ENCODE measurements at regions of chr12 and their contacts with region 1.

Region 1: DNA sequence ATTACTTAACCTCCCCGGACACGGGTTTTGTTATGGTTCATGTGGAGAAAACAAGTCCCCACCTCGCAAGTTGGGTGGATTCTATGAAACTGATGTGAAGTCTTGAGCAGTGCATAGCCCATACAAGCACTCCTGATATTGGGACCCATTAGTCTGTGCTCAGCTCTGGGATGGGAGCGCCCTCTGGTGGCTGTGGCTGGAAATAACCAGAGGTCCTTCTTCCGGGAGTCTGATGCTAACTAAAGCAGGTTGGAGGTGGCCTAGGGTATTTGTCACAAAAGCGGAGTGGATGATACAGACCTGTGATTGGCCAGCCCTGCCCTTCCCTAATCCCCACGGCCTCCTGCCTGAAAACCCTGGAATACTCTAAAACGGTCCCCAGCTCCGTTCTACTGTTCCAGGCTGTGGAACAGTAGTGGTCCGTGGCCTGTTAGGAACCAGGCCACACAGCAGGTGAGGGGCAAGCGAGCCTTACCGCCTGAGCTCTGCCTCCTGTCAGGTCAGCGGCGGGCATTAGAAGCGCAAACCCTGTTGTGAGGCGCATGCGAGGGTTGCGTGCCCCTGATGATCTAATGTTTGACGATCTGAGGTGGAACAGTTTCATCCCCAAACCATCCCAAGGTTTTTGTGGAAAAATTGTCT is 6.4 kb downstream of the SLC48A1 start:
- DNase-seq: peak; percentile 84 to 94 (median 86)
- ATAC-seq: peak; percentile 53 to 80 (median 66)
- H3K4me3 ChIP-seq: no peak overlapping the region
- H3K27ac ChIP-seq: peak overlapping the region in 2 of 12 donors; percentile 12 to 43
- H3K4me1 ChIP-seq: peaks cover under 1 to 61% (median 50%) of the 10 kb centered on the region in 12 donors
- H3K27me3 ChIP-seq: no peaks in the 10 kb centered on the region
- CTCF ChIP-seq: peak; percentile 89 to 98 (median 92)
- POLR2A ChIP-seq: no peak

Region 2: GRCh38 chr12:47808050-47808449 is 28.6 kb after region 1 on chr12:
- intact Hi-C with region 1: no loop called
- DNase-seq: peak; percentile 65 to 78 (median 73)
- ATAC-seq: peak; percentile 19 to 51 (median 26)
- H3K4me3 ChIP-seq: peak overlapping the region in 8 of 12 donors; percentile 1 to 31 (median 9)
- H3K27ac ChIP-seq: peak overlapping the region; percentile 37 to 99 (median 98)
- H3K4me1 ChIP-seq: peaks cover 49 to 100% (median 98%) of the 10 kb centered on the region in 12 donors
- H3K27me3 ChIP-seq: no peaks in the 10 kb centered on the region
- CTCF ChIP-seq: no peak
- POLR2A ChIP-seq: no peak

Region 3: GRCh38 chr12:47819896-47820630 is 40.6 kb after region 1 on chr12 and contains the start of gene HDAC7:
- intact Hi-C with region 1: loop called in 1 of 10 experiments (anchors 5 kb)
- DNase-seq: peak; percentile 94
- ATAC-seq: peak; percentile 69 to 83 (median 74)
- H3K4me3 ChIP-seq: peak within 1 kb of the TSS; percentile 65 to 98 (median 80)
- H3K27ac ChIP-seq: peak within 1 kb of the TSS; percentile 94 to 99 (median 98)
- H3K4me1 ChIP-seq: peaks cover 13 to 87% (median 74%) of the 10 kb centered on the region in 12 donors
- H3K27me3 ChIP-seq: no peaks in the 10 kb centered on the region
- CTCF ChIP-seq: peak in 1 of 12 donors; percentile 10
- POLR2A ChIP-seq: peak in 1 of 2 donors; percentile 69
- total RNA-seq, gene HDAC7: 27.4 to 63.0 (median 38.6) TPM

Region 4: GRCh38 chr12:47828608-47829536 is 49.5 kb after region 1 on chr12:
- intact Hi-C with region 1: loop called in 2 of 10 experiments (anchors 2 to 10 kb)
- DNase-seq: peak; percentile 85 to 91 (median 88)
- ATAC-seq: peak; percentile 68 to 90 (median 88)
- H3K4me3 ChIP-seq: peak overlapping the region in 6 of 12 donors; percentile 1 to 18 (median 11)
- H3K27ac ChIP-seq: peak overlapping the region; percentile 76 to 99 (median 90)
- H3K4me1 ChIP-seq: peaks cover 11 to 76% (median 60%) of the 10 kb centered on the region in 12 donors
- H3K27me3 ChIP-seq: no peaks in the 10 kb centered on the region
- CTCF ChIP-seq: no peak
- POLR2A ChIP-seq: no peak

Region 5: DNA sequence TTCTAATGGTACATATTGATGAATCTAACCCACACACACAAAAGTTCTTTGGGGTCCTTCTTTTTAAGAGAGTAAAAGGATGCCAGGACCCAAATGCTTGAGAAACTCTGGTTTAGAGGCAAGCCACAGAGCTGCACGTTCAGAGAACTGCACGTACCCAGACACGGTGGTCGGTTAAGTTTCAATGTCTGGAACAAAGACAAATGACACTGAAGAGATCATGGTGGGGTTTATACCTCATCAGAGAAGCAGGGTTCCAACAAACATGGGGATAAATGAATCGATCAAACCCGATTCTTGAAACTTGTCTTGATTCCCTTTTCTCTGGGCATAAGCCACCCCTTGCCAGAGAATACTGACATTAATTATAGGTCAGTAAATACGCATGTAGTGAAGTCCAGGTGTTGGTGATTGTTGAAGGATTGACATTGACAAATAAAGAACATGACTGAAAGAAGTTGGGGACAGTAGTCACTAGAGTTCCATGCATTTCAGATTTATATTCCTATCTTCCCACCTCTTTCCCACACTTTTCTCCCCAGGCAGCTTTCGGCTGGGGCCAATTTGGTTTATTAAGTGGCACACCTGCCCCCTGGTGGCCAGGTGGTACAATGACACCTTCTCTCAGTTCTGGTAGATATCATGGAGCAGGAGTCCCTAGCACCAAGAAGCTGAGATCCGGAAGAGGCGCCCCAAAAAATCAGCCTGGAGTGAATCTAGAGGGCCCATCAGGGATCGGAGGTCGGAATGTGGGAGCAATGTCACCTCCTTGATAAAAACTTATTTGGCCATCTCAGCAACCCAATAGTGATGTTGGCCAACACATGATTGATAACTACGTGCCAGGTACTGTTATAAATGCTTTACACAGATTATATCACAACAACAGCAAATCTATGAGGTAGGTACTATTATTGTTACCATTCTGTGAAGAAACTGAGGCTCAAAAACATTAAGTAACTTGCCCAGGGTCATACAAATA is 58.1 kb after region 1 on chr12:
- intact Hi-C with region 1: loop called in 9 of 10 experiments (anchors 2 to 10 kb)
- DNase-seq: peak; percentile 69 to 81 (median 72)
- ATAC-seq: peak; percentile 52 to 78 (median 70)
- H3K4me3 ChIP-seq: no peak overlapping the region
- H3K27ac ChIP-seq: peak overlapping the region in 1 of 12 donors; percentile 36
- H3K4me1 ChIP-seq: peaks cover 0 to 33% (median 11%) of the 10 kb centered on the region in 12 donors
- H3K27me3 ChIP-seq: no peaks in the 10 kb centered on the region
- CTCF ChIP-seq: peak; percentile 89 to 99 (median 92)
- POLR2A ChIP-seq: no peak

Measured in heart left ventricle (tissue), 16 donors.